HepG2 (cell line): ENCODE measurements at regions of chr12 and their contacts with region 1.

Region 1: GRCh38 chr12:17763366-17763765 is 326.6 kb downstream of the RERGL start:
- DNase-seq: no peak
- ATAC-seq: no peak
- H3K4me3 ChIP-seq: no peak overlapping the region
- H3K27ac ChIP-seq: no peak overlapping the region
- H3K4me1 ChIP-seq: no peaks in the 10 kb centered on the region
- H3K27me3 ChIP-seq: no peaks in the 10 kb centered on the region
- CTCF ChIP-seq: no peak
- EP300 ChIP-seq: no peak
- POLR2A ChIP-seq: no peak
- RAD21 ChIP-seq: no peak

Region 2: GRCh38 chr12:17841496-17841895 is 78.1 kb after region 1 on chr12:
- CTCF ChIA-PET with region 1: no interaction called
- POLR2A ChIA-PET with region 1: no interaction called
- in situ Hi-C with region 1: loop called (anchors 5 kb)
- intact Hi-C with region 1: no loop called
- DNase-seq: no peak
- ATAC-seq: no peak
- H3K4me3 ChIP-seq: no peak overlapping the region
- H3K27ac ChIP-seq: no peak overlapping the region
- H3K4me1 ChIP-seq: no peaks in the 10 kb centered on the region
- H3K27me3 ChIP-seq: no peaks in the 10 kb centered on the region
- CTCF ChIP-seq: no peak
- EP300 ChIP-seq: no peak
- POLR2A ChIP-seq: no peak
- RAD21 ChIP-seq: no peak

Region 3: DNA sequence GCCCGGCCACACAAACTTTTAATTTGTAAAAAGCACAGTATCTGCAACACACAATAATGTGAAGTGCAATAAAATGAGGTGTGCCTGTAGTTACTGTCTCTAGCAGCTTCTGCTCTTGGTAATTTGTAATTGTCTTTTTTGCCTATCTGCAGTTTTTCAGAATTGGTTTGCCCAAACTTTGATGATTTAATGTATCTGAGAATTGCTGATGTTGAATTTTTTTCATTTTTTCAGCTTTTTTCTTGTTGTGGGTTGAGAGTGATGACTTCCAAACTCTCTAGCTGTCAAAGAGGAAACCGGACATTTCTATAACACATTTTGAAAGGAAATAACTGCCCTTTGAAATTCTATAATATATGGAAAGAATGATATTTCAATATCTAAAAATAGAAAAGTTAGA is 89.7 kb after region 1 on chr12:
- CTCF ChIA-PET with region 1: no interaction called
- POLR2A ChIA-PET with region 1: no interaction called
- in situ Hi-C with region 1: loop called (anchors 5 kb)
- intact Hi-C with region 1: loop called (anchors 5 kb)
- DNase-seq: no peak
- ATAC-seq: no peak
- H3K4me3 ChIP-seq: no peak overlapping the region
- H3K27ac ChIP-seq: no peak overlapping the region
- H3K4me1 ChIP-seq: no peaks in the 10 kb centered on the region
- H3K27me3 ChIP-seq: no peaks in the 10 kb centered on the region
- CTCF ChIP-seq: no peak
- EP300 ChIP-seq: no peak
- POLR2A ChIP-seq: no peak
- RAD21 ChIP-seq: no peak